ENCODE measurements at regions of chr14 and their contacts with region 1.

Region 1: DNA sequence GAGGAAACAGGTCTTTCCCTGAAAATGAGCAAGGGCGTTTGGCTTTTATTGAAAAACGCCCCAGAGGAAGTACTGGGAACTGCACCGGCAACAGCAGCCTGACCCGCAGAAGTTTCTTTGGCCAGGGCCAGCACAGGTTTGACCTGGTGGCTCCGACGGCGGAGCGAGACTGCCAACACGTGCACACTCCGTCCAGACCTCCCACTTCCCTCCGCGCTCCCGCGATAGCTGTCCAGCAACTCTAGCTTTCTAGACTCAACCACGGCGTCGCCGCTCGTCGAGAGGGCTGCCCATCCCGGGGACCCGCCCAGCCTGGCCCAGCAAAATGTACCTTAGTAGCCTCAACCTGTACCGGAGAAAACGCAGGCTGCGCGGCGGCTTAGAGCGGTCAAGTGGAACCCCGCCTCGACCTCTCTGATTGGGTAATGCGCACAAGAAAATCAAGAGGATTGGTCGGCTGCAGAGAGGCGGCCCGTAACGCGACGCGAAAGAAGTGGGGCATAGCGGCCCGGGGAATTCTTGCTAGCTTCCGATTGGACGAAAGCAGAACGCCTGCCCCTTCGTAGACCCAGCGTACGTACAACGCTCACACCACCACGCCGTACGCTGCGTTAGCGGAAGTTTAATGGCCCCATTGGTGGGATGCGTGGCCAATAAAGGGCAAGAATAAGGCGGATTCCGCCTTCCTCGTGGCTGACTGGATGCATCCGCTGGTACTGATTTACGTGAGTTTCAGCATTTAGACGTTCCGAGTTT is at the start of gene WDR89:
- DNase-seq: peak; percentile 99
- ATAC-seq: peak; percentile 93
- H3K4me3 ChIP-seq: peak within 1 kb of the TSS; percentile 94
- H3K27ac ChIP-seq: peak within 1 kb of the TSS; percentile 89
- H3K4me1 ChIP-seq: peaks cover 16% of the 10 kb centered on the region
- H3K27me3 ChIP-seq: no peaks in the 10 kb centered on the region
- CTCF ChIP-seq: peak; percentile 76
- total RNA-seq, gene WDR89: 12.1 and 19.0 TPM in 2 replicates

Region 2: GRCh38 chr14:63448841-63449240 is 192.8 kb before region 1 on chr14:
- CTCF ChIA-PET with region 1: no interaction called
- POLR2A ChIA-PET with region 1: no interaction called
- intact Hi-C with region 1: no loop called
- DNase-seq: no peak
- ATAC-seq: no peak
- H3K4me3 ChIP-seq: no peak overlapping the region
- H3K27ac ChIP-seq: no peak overlapping the region
- H3K4me1 ChIP-seq: peaks cover 5% of the 10 kb centered on the region; the same call in 1 of the 2 replicates
- H3K27me3 ChIP-seq: no peaks in the 10 kb centered on the region
- CTCF ChIP-seq: no peak

Region 3: DNA sequence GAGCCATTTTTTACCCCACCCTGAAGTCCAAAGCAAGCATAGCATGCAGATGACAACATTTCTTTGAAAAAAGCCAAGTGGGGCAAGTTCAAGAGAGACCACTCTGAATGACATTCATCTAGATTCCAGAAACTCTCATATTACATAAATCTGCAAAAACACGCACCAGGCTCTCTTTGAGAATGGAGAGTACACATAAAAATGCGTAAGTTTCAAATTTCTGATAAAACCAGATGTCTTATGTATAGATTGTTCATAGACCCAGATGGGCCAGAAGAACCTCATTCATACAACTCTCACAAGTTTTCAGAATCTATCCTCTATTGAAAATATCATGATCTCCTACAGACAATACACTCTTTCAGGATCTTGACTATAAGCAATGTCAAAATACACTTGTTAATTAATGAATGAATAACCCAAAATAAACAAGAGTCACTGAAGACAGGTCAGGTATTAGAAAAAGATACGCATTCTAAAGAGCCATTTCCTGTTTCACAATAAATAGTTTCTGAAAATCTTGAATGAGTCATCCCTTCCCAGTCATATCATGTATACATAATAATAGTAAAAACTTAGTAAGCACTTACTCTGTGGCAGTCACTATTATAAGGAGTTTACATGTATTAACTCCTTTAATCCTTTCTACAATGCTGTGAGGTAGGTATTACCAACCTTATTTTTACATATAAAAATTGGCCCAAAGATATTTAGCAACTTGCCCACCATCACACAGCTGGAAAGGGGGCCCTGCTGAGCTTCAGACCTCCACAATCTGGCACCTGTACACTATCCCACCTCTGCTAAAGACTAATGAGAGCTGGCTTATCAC is 170.5 kb before region 1 on chr14:
- CTCF ChIA-PET with region 1: no interaction called
- POLR2A ChIA-PET with region 1: interaction called, 10 read pairs
- intact Hi-C with region 1: loop called (anchors 5 kb)
- DNase-seq: peak; percentile 96
- ATAC-seq: peak; percentile 87
- H3K4me3 ChIP-seq: peak overlapping the region; percentile 25; the same call in 1 of the 2 replicates
- H3K27ac ChIP-seq: peak overlapping the region; percentile 89
- H3K4me1 ChIP-seq: peaks cover 55% of the 10 kb centered on the region
- H3K27me3 ChIP-seq: no peaks in the 10 kb centered on the region
- CTCF ChIP-seq: no peak

Region 4: DNA sequence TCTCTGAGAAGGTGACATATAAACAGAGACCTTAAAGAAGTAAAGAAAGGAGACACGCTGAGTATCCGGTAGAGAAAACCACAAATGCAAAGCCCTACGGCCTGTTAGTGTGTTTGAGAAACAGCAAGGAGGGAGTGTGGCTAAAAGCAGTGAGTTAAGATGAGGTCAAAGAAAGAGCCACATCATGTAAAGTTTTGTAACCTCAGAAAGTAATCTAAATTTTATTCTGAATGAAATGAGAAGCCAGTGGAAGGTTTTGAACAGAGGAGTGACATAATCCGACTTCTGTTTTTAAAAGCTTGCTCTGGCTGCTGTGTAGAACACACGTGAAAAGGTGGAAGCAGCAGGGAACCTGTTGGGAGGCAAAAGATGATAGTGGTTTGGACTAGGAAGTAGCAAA is 131.1 kb before region 1 on chr14:
- CTCF ChIA-PET with region 1: no interaction called
- POLR2A ChIA-PET with region 1: no interaction called
- intact Hi-C with region 1: no loop called
- DNase-seq: no peak
- ATAC-seq: no peak
- H3K4me3 ChIP-seq: no peak overlapping the region
- H3K27ac ChIP-seq: no peak overlapping the region
- H3K4me1 ChIP-seq: peaks cover 6% of the 10 kb centered on the region
- H3K27me3 ChIP-seq: no peaks in the 10 kb centered on the region
- CTCF ChIP-seq: no peak

Region 5: GRCh38 chr14:63654936-63655335 is 13.3 kb after region 1 on chr14:
- CTCF ChIA-PET with region 1: interaction called, 3 read pairs
- POLR2A ChIA-PET with region 1: interaction called, 14 read pairs
- intact Hi-C with region 1: no loop called
- DNase-seq: no peak
- ATAC-seq: no peak
- H3K4me3 ChIP-seq: no peak overlapping the region
- H3K27ac ChIP-seq: no peak overlapping the region
- H3K4me1 ChIP-seq: peaks cover 6% of the 10 kb centered on the region; the same call in 1 of the 2 replicates
- H3K27me3 ChIP-seq: no peaks in the 10 kb centered on the region
- CTCF ChIP-seq: no peak

Region 6: GRCh38 chr14:63713765-63714164 is 72.1 kb after region 1 on chr14:
- CTCF ChIA-PET with region 1: interaction called, 5 read pairs
- POLR2A ChIA-PET with region 1: no interaction called
- intact Hi-C with region 1: loop called (anchors 5 kb)
- DNase-seq: peak; percentile 76
- ATAC-seq: peak; percentile 97
- H3K4me3 ChIP-seq: no peak overlapping the region
- H3K27ac ChIP-seq: peak overlapping the region; percentile 72
- H3K4me1 ChIP-seq: peaks cover 15% of the 10 kb centered on the region
- H3K27me3 ChIP-seq: no peaks in the 10 kb centered on the region
- CTCF ChIP-seq: no peak

Region 7: DNA sequence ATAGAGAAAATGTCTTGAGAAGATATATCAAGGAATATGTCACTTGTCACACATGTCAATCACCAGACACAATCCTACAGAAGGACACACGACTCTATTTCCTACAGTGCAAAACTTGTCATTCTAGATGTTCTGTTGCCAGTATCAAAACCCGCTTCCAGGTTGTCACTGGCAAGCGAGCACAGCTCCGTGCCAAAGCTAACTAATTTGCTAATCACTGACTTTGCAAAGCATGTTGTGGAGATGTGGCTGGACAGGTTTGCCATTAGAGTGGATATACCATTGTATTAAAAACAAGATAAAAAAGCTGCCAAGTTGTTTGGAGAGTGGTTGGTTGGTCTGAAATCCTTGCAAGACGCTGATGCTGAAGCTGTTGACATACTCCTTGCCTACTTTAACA is 94.1 kb after region 1 on chr14:
- CTCF ChIA-PET with region 1: no interaction called
- POLR2A ChIA-PET with region 1: no interaction called
- intact Hi-C with region 1: no loop called
- DNase-seq: no peak
- ATAC-seq: no peak
- H3K4me3 ChIP-seq: no peak overlapping the region
- H3K27ac ChIP-seq: no peak overlapping the region
- H3K4me1 ChIP-seq: no peaks in the 10 kb centered on the region
- H3K27me3 ChIP-seq: no peaks in the 10 kb centered on the region
- CTCF ChIP-seq: no peak

Region 8: DNA sequence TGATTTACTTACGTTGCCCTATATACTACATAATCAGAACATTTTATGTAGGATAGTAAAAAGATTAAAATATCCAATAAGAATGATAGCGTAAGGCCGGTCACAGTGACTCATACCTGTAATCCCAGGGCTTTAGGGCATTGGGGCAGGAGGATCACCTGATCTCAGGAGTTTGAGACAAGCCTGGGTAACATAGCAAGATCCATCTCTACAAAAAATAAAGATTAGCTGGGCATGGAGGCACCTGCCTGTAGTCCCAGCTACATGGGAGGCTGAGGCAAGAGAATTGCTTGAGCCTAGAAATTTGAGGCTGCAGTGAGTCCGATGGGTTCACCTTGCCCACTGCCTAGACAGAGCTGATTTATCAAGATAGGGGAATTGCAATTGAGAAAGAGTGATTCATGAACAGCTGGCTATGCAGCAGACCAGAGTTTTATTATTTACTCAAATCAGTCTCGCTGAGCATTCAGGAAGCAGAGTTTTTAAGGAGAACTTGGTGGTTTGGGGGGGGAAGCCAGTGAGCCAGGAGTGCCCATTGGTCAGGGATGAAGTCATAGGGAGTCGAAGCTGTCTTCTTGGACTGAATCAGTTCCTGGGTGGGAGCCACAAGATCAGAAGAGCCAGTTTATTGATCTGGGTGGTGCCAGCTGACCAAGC is 111.0 kb after region 1 on chr14:
- CTCF ChIA-PET with region 1: interaction called, 6 read pairs
- POLR2A ChIA-PET with region 1: interaction called, 5 read pairs
- intact Hi-C with region 1: loop called (anchors 1 kb)
- DNase-seq: peak; percentile 96
- ATAC-seq: peak; percentile 96
- H3K4me3 ChIP-seq: peak overlapping the region; percentile 53
- H3K27ac ChIP-seq: peak overlapping the region; percentile 93
- H3K4me1 ChIP-seq: peaks cover 10% of the 10 kb centered on the region
- H3K27me3 ChIP-seq: no peaks in the 10 kb centered on the region
- CTCF ChIP-seq: no peak

Region 9: DNA sequence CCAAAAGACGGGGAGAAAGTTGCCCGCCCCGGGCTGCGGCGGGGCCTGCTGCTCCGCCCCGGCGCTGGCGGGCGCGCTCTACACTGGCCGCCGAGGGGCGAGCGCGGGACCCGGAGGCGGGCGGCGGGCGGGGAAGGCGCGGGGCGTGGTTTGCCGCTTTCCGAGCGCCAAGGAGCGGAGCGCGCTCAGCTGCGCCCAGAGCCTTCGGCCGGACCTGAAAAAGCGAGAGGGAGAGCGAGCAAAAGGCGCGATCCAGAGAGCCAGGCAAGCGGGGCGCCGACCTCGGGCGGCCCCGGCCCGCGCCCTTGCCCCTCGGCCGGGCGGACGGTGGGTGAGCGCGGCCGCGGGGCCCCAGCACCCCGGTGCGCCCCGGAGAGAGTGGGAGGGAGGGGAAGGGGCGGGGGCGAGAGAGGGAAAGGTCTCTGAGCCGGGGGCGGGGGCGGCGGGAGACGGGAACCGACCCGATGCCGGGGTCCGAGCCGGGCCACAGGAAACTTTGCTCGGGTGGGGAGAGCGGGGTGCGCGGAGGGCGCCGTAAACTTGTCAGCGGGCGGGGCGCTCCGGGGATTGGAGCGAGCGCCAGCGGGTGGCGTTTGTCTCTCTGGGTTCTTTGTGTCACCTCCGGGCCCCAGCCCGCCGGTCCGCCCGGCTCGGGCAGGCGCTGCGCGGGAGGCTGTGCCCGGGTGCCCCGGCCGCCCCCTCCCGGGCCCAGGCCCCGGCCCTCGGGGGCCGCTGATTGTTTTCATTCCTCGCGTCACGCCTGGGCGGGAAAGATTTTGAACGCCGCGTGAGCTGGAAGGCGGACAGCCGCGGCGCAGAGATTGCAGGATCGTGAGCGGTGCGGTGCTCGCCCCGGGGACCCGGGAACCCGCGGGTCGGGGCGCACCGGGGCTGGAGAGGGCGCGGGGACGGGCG is 211.4 kb after region 1 on chr14 and contains the start of gene SYNE2:
- CTCF ChIA-PET with region 1: no interaction called
- POLR2A ChIA-PET with region 1: no interaction called
- intact Hi-C with region 1: loop called (anchors 5 kb)
- DNase-seq: peak; percentile 82
- ATAC-seq: peak; percentile 86
- H3K4me3 ChIP-seq: peak within 1 kb of the TSS; percentile 71
- H3K27ac ChIP-seq: no peak within 1 kb of the TSS
- H3K4me1 ChIP-seq: peaks cover 12% of the 10 kb centered on the region
- H3K27me3 ChIP-seq: no peaks in the 10 kb centered on the region
- CTCF ChIP-seq: no peak
- total RNA-seq, gene SYNE2: 16.0 and 20.7 TPM in 2 replicates

Region 10: DNA sequence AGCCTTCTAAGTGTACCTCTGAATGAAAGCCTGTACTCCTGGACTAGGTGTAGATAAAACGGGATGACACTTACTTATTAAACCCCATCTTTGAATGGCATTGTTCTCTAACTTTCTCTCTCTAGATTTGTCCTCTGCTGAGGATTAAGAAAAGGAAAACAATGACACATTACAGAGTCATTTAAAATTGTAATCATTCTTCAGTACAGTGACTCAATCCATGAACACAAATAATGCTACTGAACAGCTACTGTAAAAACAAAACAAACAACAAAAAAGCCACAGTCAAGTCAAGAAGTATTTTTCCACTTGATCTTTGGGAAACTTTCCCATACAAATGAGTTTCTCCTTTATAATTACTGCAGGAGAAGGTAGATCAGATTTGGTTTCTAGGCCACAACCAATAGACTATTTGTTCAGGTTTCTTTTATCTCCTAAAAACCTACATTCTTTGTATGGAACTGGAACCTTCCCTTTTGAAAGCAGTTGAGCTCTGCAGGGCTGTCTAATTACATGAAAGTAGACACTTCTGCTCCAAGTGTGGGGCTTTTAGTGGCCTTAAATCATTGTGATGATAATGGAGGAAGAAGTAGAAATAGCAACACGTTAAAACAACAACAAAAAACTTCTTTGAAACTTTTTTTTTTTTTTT is 433.4 kb after region 1 on chr14:
- CTCF ChIA-PET with region 1: no interaction called
- POLR2A ChIA-PET with region 1: no interaction called
- intact Hi-C with region 1: no loop called
- DNase-seq: peak; percentile 90
- ATAC-seq: peak; percentile 98
- H3K4me3 ChIP-seq: no peak overlapping the region
- H3K27ac ChIP-seq: peak overlapping the region; percentile 70
- H3K4me1 ChIP-seq: peaks cover 19% of the 10 kb centered on the region
- H3K27me3 ChIP-seq: no peaks in the 10 kb centered on the region
- CTCF ChIP-seq: no peak

Measured in PC-3 (cell line).